PC-3 (cell line): ENCODE measurements at regions of chr6 and their contacts with region 1.

Region 1: GRCh38 chr6:76682842-76683241 is 610.4 kb upstream of the IMPG1 start:
- DNase-seq: peak; percentile 28
- ATAC-seq: no peak
- H3K4me3 ChIP-seq: no peak overlapping the region
- H3K27ac ChIP-seq: no peak overlapping the region
- H3K4me1 ChIP-seq: no peaks in the 10 kb centered on the region
- H3K27me3 ChIP-seq: no peaks in the 10 kb centered on the region
- CTCF ChIP-seq: peak; percentile 40

Region 2: GRCh38 chr6:76724760-76725159 is 41.9 kb after region 1 on chr6:
- CTCF ChIA-PET with region 1: no interaction called
- POLR2A ChIA-PET with region 1: no interaction called
- intact Hi-C with region 1: no loop called
- DNase-seq: no peak
- ATAC-seq: no peak
- H3K4me3 ChIP-seq: no peak overlapping the region
- H3K27ac ChIP-seq: no peak overlapping the region
- H3K4me1 ChIP-seq: no peaks in the 10 kb centered on the region
- H3K27me3 ChIP-seq: no peaks in the 10 kb centered on the region
- CTCF ChIP-seq: no peak

Region 3: GRCh38 chr6:76877238-76877553 is 194.4 kb after region 1 on chr6:
- CTCF ChIA-PET with region 1: interaction called, 3 read pairs
- POLR2A ChIA-PET with region 1: no interaction called
- intact Hi-C with region 1: loop called (anchors 1 kb)
- DNase-seq: no peak
- ATAC-seq: no peak
- H3K4me3 ChIP-seq: no peak overlapping the region
- H3K27ac ChIP-seq: no peak overlapping the region
- H3K4me1 ChIP-seq: no peaks in the 10 kb centered on the region
- H3K27me3 ChIP-seq: no peaks in the 10 kb centered on the region
- CTCF ChIP-seq: no peak

Region 4: GRCh38 chr6:77450924-77451323 is 768.1 kb after region 1 on chr6:
- CTCF ChIA-PET with region 1: no interaction called
- POLR2A ChIA-PET with region 1: no interaction called
- intact Hi-C with region 1: loop called (anchors 5 kb)
- DNase-seq: no peak
- ATAC-seq: no peak
- H3K4me3 ChIP-seq: no peak overlapping the region
- H3K27ac ChIP-seq: no peak overlapping the region
- H3K4me1 ChIP-seq: no peaks in the 10 kb centered on the region; the same call in 1 of the 2 replicates
- H3K27me3 ChIP-seq: no peaks in the 10 kb centered on the region
- CTCF ChIP-seq: 0 out of 2 replicates have a peak, but pooled peaks have one; percentile 11

Region 5: DNA sequence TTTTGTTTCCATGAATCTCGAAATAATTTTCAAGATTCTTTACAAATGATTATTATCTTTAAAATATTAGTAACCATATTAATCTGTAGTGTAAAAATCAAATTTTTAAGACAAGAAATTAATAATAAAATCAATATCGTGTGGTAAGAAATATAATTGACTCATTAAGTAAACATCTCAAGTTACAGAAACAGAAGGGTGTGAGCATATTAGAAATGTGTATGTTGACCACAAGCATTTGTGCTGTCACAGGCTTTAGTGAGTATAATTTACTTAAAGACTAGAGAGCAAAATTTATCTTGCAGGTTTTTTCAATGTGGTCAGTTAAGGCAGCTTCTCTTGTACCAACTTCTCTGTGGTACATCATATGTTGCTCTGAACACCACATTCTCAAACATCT is 1618.0 kb after region 1 on chr6:
- CTCF ChIA-PET with region 1: no interaction called
- POLR2A ChIA-PET with region 1: no interaction called
- intact Hi-C with region 1: no loop called
- DNase-seq: peak; percentile 10
- ATAC-seq: no peak
- H3K4me3 ChIP-seq: no peak overlapping the region
- H3K27ac ChIP-seq: no peak overlapping the region
- H3K4me1 ChIP-seq: no peaks in the 10 kb centered on the region
- H3K27me3 ChIP-seq: no peaks in the 10 kb centered on the region
- CTCF ChIP-seq: no peak